CD4-positive, alpha-beta memory T cell (primary cell): ENCODE measurements at regions of chr1 and their contacts with region 1.

Region 1: GRCh38 chr1:155688324-155689080 is at the start of gene YY1AP1:
- DNase-seq: peak; percentile 91 to 96 (median 91)
- H3K4me3 ChIP-seq: peak within 1 kb of the TSS; percentile 84 to 92
- H3K4me3 Mint-ChIP-seq: peak within 1 kb of the TSS; percentile 94 to 99 (median 97)
- H3K27ac ChIP-seq: peak within 1 kb of the TSS; percentile 96
- H3K27ac Mint-ChIP-seq: peak within 1 kb of the TSS; percentile 95 to 99 (median 97)
- H3K4me1 ChIP-seq: peaks cover 66% of the 10 kb centered on the region
- H3K4me1 Mint-ChIP-seq: peaks cover 45 to 90% (median 64%) of the 10 kb centered on the region in 4 donors
- H3K27me3 ChIP-seq: no peaks in the 10 kb centered on the region
- H3K27me3 Mint-ChIP-seq: no peaks in the 10 kb centered on the region
- total RNA-seq, gene YY1AP1: 97.0 to 102 TPM

Region 2: DNA sequence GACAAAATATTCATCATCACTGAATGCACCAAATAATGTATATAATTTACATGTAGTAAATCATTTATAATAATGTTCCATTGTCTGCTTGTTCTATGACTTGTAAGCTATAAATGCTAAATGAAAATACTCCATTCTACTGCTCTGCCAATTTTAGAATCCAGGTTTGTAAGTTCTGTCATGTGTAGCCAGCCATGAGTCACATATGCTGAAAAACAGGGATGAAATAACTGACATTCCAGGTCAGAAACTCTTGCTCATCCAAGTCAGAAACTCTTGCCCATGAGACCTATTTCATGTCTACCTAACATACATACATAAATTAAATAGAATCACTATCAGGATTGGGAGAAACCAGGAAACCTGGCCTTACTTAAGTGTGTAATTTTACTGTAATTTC is 221.5 kb before region 1 on chr1:
- CTCF ChIA-PET with region 1: no interaction called
- POLR2A ChIA-PET with region 1: no interaction called
- intact Hi-C with region 1: no loop called
- DNase-seq: no peak
- H3K4me3 ChIP-seq: no peak overlapping the region
- H3K4me3 Mint-ChIP-seq: peak overlapping the region in 5 of 8 donors; percentile 31 to 84 (median 46)
- H3K27ac ChIP-seq: peak overlapping the region; percentile 44
- H3K27ac Mint-ChIP-seq: peak overlapping the region; percentile 10 to 98 (median 91)
- H3K4me1 ChIP-seq: peaks cover 30% of the 10 kb centered on the region
- H3K4me1 Mint-ChIP-seq: peaks cover 29 to 50% (median 39%) of the 10 kb centered on the region in 4 donors
- H3K27me3 ChIP-seq: no peaks in the 10 kb centered on the region
- H3K27me3 Mint-ChIP-seq: no peaks in the 10 kb centered on the region

Region 3: DNA sequence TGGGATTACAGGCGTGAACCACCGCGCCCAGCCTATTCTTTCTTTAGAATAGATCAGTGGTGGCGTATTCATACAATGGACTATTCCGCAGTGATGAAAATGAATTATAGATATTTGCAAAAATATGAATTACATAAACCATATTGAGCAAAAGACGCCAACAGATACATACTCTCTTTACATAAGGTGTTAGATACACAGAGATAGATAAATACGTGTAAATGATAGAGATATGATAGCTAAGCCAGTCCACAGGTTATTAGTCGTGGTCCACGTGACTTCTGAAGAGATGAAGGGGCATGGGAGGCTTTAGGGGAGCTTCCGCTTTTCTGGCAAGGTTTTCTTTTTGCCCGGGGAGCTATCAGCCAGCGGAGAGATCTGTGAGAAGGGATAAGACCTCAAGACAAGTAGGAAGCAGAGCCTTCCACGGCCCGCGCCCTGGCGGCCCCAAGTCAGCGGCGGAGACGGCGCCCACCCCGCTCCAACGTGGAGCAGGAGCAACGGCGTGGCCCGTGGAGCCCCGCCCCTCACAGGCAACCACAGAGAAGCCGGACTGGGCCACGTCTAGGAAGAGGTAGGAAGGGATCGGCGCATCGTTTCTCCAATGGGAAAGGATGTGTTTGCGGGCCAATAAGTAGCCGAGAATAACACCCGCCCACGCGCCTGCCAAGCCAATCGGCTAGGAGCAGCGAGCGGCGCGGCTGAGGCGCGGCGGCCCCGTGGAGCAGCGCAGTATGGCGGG is 78.8 kb before region 1 on chr1 and contains the start of gene MSTO1:
- CTCF ChIA-PET with region 1: no interaction called
- POLR2A ChIA-PET with region 1: no interaction called
- intact Hi-C with region 1: loop called (anchors 1 kb)
- DNase-seq: peak; percentile 89 to 97 (median 91)
- H3K4me3 ChIP-seq: peak within 1 kb of the TSS; percentile 54 to 80
- H3K4me3 Mint-ChIP-seq: peak within 1 kb of the TSS; percentile 90 to 99 (median 95)
- H3K27ac ChIP-seq: peak within 1 kb of the TSS; percentile 70
- H3K27ac Mint-ChIP-seq: peak within 1 kb of the TSS; percentile 75 to 98 (median 91)
- H3K4me1 ChIP-seq: peaks cover 4% of the 10 kb centered on the region
- H3K4me1 Mint-ChIP-seq: peaks cover 1 to 14% (median 5%) of the 10 kb centered on the region in 4 donors
- H3K27me3 ChIP-seq: no peaks in the 10 kb centered on the region
- H3K27me3 Mint-ChIP-seq: no peaks in the 10 kb centered on the region
- total RNA-seq, gene MSTO1: 125 to 127 TPM

Region 4: DNA sequence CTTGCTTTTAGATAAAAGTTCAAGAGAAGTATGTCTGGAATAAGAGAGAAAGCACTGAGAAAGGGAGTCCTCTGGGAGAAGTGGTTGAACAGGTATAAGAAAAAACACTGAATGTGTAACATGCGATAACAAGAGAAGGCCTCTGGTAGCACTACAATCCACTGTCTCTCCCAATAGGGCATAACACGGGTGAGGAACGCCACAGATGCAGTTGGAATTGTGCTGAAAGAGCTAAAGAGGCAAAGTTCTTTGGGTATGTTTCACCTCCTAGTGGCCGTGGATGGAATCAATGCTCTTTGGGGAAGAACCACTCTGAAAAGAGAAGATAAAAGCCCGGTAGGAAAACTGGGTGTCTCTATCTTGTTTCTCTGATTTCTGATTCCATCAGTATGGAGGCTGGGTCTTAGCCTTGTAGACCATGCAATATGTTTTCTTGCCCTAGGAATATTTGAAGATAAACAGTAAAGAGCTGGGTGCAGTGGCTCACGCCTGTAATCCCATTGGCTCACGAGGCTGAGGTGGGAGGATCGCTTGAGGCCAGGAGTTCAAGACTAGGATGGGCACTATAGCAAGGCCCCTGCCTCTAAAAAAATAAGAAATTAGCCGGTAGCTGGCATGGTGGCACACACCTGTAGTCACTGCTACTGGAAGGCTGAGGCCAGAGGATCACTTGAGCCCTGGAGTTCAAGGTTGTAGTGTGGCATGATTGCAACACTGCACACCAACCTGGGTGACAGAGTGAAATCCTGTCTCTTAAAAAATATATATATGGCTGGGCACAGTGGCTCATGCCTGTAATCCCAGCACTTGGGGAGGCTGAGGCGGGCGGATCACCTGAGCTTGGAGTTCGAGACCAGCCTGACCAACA is 40.8 kb after region 1 on chr1:
- CTCF ChIA-PET with region 1: interaction called, 3 read pairs
- POLR2A ChIA-PET with region 1: no interaction called
- intact Hi-C with region 1: loop called (anchors 10 kb)
- DNase-seq: peak; percentile 18 to 48 (median 23)
- H3K4me3 ChIP-seq: no peak overlapping the region
- H3K4me3 Mint-ChIP-seq: no peak overlapping the region
- H3K27ac ChIP-seq: no peak overlapping the region
- H3K27ac Mint-ChIP-seq: peak overlapping the region in 4 of 7 donors; percentile 47 to 88 (median 50)
- H3K4me1 ChIP-seq: no peaks in the 10 kb centered on the region
- H3K4me1 Mint-ChIP-seq: peaks cover 0 to 1% (median 0%) of the 10 kb centered on the region in 4 donors
- H3K27me3 ChIP-seq: no peaks in the 10 kb centered on the region
- H3K27me3 Mint-ChIP-seq: no peaks in the 10 kb centered on the region

Region 5: DNA sequence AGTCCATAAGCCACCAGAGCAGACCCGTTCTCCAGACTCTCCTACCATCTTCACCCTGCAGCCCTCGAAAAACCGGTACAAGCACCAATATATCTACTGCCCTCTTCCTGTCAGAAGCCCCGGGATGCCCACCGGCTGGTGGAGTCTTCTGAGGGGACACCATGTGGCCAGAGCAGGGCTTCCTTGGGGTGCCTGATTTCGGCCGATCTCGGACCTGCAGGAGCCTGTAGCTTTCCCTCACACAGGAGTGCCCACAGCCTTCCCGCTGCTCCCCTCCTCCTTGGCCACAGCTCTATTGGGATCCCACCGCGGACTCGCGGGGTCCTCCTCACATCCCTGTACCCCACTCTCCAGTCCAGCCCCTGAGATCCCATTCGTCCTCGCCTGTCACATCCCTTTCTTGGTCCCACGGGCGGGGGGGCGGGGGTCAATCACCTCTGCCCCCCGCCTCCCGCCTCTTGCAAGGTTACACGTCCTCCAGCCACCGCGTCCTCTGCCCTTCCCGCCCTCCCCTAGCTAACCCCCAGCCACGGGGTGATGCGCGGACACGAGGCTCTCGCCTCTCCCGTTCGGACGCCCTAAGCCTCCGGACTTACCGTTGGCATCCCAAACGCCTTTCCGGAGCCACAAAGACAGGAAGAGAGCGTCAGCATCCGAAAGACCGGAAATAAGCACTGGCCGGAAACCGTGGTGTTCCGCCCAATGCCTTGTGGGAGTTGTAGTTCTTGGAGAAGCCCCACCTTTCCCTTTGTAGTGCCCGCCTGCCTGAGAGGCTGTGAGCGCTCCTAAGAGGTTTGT is 332.0 kb after region 1 on chr1 and contains the start of gene SSR2:
- CTCF ChIA-PET with region 1: no interaction called
- POLR2A ChIA-PET with region 1: no interaction called
- intact Hi-C with region 1: loop called (anchors 10 kb)
- DNase-seq: peak; percentile 85 to 92 (median 87)
- H3K4me3 ChIP-seq: peak within 1 kb of the TSS; percentile 78 to 81
- H3K4me3 Mint-ChIP-seq: peak within 1 kb of the TSS; percentile 96 to 99 (median 99)
- H3K27ac ChIP-seq: peak within 1 kb of the TSS; percentile 77
- H3K27ac Mint-ChIP-seq: peak within 1 kb of the TSS; percentile 82 to 99 (median 98)
- H3K4me1 ChIP-seq: peaks cover 17% of the 10 kb centered on the region
- H3K4me1 Mint-ChIP-seq: peaks cover 20 to 44% (median 30%) of the 10 kb centered on the region in 4 donors
- H3K27me3 ChIP-seq: no peaks in the 10 kb centered on the region
- H3K27me3 Mint-ChIP-seq: peaks cover 0 to 2% of the 10 kb centered on the region in 2 donors
- total RNA-seq, gene SSR2: 252 to 276 TPM